ENCODE measurements at regions of chr10 and their contacts with region 1.

Region 1: DNA sequence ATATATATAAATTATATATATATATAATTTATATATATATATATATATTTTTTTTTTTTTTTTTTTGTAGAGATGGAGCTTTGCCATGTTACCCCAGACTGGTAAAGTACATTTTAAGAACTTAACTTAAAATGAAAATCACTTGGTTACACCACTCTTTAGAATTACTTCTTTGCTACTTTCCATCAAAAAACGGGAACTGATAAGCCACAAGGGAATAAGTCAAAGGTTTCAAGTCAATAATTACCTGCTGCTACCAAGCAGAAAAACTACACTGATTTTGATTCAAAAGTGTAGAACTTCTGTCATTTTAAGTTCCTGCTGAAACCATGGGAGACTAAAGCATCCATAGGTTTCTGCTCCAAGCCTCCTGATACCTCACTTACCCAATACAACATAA is 12.2 kb downstream of the PPA1 start:
- DNase-seq: no peak
- ATAC-seq: no peak
- H3K4me3 Mint-ChIP-seq: no peak overlapping the region
- H3K27ac Mint-ChIP-seq: no peak overlapping the region
- H3K4me1 Mint-ChIP-seq: peaks cover 36% of the 10 kb centered on the region
- H3K27me3 Mint-ChIP-seq: no peaks in the 10 kb centered on the region

Region 2: GRCh38 chr10:69567920-69568319 is 653.1 kb before region 1 on chr10:
- CTCF ChIA-PET with region 1: no interaction called
- POLR2A ChIA-PET with region 1: no interaction called
- intact Hi-C with region 1: no loop called
- DNase-seq: peak; percentile 65
- ATAC-seq: no peak
- H3K4me3 Mint-ChIP-seq: no peak overlapping the region
- H3K27ac Mint-ChIP-seq: no peak overlapping the region
- H3K4me1 Mint-ChIP-seq: peaks cover 6% of the 10 kb centered on the region
- H3K27me3 Mint-ChIP-seq: peaks cover 60% of the 10 kb centered on the region

Region 3: DNA sequence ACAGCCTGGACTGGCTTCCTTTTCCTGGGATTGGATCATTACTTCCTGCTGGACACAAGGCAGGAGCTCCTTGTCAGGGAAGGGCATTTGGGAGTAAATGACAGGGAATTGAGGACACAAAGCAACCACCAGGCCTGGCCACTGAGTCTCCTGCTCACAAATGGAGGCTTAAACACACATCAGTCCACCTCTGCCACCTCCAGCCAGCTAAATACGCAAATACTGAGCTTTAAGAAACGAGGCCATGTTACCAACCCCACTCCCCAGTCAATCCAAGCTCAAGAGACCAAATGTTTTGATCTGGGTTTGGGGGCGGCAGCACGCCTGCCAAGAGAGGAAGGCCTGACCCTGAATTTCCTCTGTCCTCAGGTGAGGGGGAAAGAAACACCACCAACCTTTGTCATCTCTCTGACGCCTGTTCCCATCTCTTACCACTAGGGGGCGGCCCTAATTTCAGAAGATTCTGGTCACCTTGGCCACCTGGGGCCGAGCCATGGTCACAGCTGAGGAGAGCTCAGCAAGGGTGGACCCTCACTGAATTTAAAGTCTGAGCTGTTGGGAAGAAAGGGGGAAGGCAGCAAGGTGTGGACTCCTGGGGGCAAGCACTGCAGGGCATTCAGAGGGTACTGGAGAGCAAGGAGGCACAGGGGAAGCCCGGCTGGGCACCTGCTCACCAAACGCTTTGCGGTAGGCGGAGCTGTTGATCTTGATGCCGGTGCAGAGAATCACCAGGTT is 104.9 kb before region 1 on chr10:
- CTCF ChIA-PET with region 1: interaction called, 10 read pairs
- POLR2A ChIA-PET with region 1: no interaction called
- intact Hi-C with region 1: no loop called
- DNase-seq: peak; percentile 71
- ATAC-seq: peak; percentile 88
- H3K4me3 Mint-ChIP-seq: no peak overlapping the region
- H3K27ac Mint-ChIP-seq: no peak overlapping the region
- H3K4me1 Mint-ChIP-seq: peaks cover 4% of the 10 kb centered on the region
- H3K27me3 Mint-ChIP-seq: no peaks in the 10 kb centered on the region

Region 4: GRCh38 chr10:70348228-70348850 is 127.3 kb after region 1 on chr10:
- CTCF ChIA-PET with region 1: interaction called, 17 read pairs
- POLR2A ChIA-PET with region 1: no interaction called
- intact Hi-C with region 1: no loop called
- DNase-seq: peak; percentile 57
- ATAC-seq: peak; percentile 61
- H3K4me3 Mint-ChIP-seq: no peak overlapping the region
- H3K27ac Mint-ChIP-seq: no peak overlapping the region
- H3K4me1 Mint-ChIP-seq: no peaks in the 10 kb centered on the region
- H3K27me3 Mint-ChIP-seq: no peaks in the 10 kb centered on the region

Region 5: DNA sequence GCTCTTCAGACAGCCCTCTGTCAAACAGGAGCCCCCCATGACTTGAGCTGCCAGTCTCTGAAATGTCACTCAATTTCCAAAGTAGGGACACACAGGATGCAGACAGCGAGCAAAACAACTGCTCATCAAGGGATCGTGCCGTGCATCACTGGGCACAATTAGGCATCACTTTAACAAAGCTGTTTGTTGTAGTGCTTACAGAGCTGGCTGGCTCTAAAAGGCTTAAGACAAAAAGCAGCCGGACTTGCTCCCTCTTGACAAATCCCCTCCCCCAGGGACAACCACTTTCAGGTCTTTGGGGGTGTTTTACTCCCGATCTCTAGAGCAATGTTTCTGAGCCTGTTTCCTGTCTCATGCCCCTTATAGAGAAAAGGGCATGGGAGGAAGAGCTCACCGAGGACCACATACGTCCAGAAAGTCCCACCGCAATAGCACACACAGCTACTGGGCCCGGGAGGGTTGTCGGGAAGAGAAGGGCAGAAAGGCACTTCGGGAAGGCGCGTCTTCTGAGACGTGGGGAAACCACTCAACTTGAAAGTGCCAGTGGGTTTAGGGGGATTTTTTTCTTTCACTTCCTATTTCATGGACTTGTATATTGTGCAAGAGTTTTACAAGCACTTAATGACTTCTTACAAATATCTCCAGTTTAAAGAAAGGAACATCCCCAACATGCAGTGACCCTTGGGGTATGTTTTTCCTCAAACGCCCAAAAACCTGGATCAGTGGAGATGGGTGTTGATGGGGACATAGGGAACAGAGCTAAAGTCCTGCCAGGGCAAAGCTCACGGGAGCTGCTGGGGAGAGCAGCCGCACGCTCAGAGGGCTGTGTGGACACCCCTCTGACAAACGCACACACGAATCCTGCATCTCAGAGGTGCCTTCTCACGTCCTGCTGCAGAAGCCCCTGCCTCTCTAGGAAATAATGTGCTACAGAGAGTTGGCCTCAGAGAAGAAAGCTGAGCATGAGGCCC is 134.3 kb after region 1 on chr10:
- CTCF ChIA-PET with region 1: interaction called, 220 read pairs
- POLR2A ChIA-PET with region 1: no interaction called
- intact Hi-C with region 1: no loop called
- DNase-seq: peak; percentile 50
- ATAC-seq: peak; percentile 80
- H3K4me3 Mint-ChIP-seq: peak overlapping the region; percentile 7
- H3K27ac Mint-ChIP-seq: peak overlapping the region; percentile 69
- H3K4me1 Mint-ChIP-seq: peaks cover 24% of the 10 kb centered on the region
- H3K27me3 Mint-ChIP-seq: no peaks in the 10 kb centered on the region

Measured in activated CD4-positive, alpha-beta T cell treated with anti-CD3 and anti-CD28 coated beads for 36 hours (primary cell).